WTC11 (cell line): ENCODE measurements at regions of chr10 and their contacts with region 1.

Region 1: GRCh38 chr10:124364633-124365032 is 54.1 kb downstream of the OAT start:
- DNase-seq: no peak
- ATAC-seq: no peak
- H3K4me3 Mint-ChIP-seq: no peak overlapping the region
- H3K27ac Mint-ChIP-seq: no peak overlapping the region
- H3K4me1 Mint-ChIP-seq: peaks cover 11% of the 10 kb centered on the region
- H3K27me3 Mint-ChIP-seq: no peaks in the 10 kb centered on the region; the same call in 1 of the 2 replicates
- CTCF ChIP-seq: no peak

Region 2: DNA sequence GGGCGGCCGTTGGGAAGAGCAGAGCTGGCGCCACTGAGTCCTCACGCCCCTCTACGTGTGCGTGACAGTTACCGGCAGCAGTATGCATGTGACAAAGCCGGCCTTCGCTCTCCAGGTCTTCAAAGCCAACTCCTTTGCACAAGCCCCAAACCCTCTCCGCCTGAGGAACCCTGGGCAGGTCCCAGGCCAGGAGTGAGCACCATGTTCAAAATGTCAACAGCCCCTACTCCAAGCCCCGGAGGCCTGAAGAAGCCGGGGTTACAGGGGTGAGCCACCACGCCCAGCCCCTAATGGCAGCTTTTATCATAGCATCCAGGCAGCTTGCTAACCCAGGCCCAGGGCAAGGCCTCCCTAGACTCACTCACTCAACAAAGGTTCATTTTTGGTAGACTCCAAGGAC is 16.7 kb before region 1 on chr10:
- CTCF ChIA-PET with region 1: interaction called, 10 read pairs
- POLR2A ChIA-PET with region 1: no interaction called
- DNase-seq: peak; percentile 46
- ATAC-seq: peak; percentile 91
- H3K4me3 Mint-ChIP-seq: no peak overlapping the region
- H3K27ac Mint-ChIP-seq: no peak overlapping the region
- H3K4me1 Mint-ChIP-seq: 0 out of 2 replicates have a peak, but pooled peaks cover 2% of the 10 kb centered on the region
- H3K27me3 Mint-ChIP-seq: no peaks in the 10 kb centered on the region; the same call in 1 of the 2 replicates
- CTCF ChIP-seq: 0 out of 2 replicates have a peak, but pooled peaks have one; percentile 12